Naive thymus-derived CD4-positive, alpha-beta T cell (primary cell): ENCODE measurements at regions of chr22 and their contacts with region 1.

Region 1: DNA sequence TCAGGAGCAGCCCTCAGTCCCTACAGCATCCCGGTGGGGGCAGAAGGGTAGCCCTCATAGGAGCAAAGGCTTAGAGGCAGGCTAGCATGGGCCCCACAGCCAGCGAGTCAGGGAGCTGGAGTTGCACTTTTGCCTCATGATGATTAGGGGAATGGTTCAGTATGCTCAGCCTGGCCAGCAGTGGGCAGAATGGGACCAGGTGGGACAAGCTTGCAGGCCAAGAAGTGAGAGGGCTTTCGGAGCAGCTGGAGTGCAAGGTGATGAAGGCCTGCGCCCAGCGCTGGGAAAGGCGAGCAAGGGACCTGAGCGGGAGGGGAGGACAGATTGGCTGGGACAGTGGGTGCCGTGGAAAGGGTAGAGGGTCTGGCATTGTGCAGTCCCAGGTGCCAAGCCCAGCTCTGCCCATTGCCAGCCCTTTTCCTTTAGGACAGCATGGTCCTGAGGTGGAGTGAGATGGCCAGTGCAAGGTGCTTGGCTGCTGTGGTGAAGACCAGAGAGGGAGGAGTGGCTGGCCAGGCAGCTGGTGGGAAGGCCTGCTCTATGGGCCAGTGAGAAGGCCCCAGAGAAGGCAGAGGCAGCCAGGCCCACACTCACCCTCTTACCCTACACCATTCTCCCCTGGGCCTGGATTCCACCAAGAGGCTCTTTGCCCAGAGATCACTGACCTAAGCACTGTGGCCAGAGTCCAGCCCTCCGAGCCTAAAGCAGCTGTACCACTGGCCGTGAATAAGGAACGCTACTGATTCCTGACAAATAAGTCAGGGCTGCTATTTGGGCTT is 47.9 kb upstream of the SUSD2 start:
- DNase-seq: peak in 7 of 9 donors; percentile 43 to 65 (median 57)
- ATAC-seq: peak; percentile 62
- H3K4me3 ChIP-seq: no peak overlapping the region
- H3K4me3 Mint-ChIP-seq: peak overlapping the region in 8 of 10 donors; percentile 2 to 79 (median 60)
- H3K27ac ChIP-seq: peak overlapping the region; percentile 62
- H3K27ac Mint-ChIP-seq: peak overlapping the region; percentile 56 to 95 (median 89)
- H3K4me1 ChIP-seq: peaks cover 6 to 18% of the 10 kb centered on the region in 2 donors
- H3K4me1 Mint-ChIP-seq: peaks cover 18 to 33% (median 29%) of the 10 kb centered on the region in 7 donors
- H3K27me3 ChIP-seq: no peaks in the 10 kb centered on the region
- H3K27me3 Mint-ChIP-seq: no peaks in the 10 kb centered on the region

Region 2: GRCh38 chr22:23997092-23997491 is 136.3 kb before region 1 on chr22:
- CTCF ChIA-PET with region 1: no interaction called
- POLR2A ChIA-PET with region 1: no interaction called
- intact Hi-C with region 1: no loop called
- DNase-seq: no peak
- ATAC-seq: no peak
- H3K4me3 ChIP-seq: no peak overlapping the region
- H3K4me3 Mint-ChIP-seq: no peak overlapping the region
- H3K27ac ChIP-seq: no peak overlapping the region
- H3K27ac Mint-ChIP-seq: no peak overlapping the region
- H3K4me1 ChIP-seq: no peaks in the 10 kb centered on the region
- H3K4me1 Mint-ChIP-seq: peaks cover 0 to 6% (median 0%) of the 10 kb centered on the region in 7 donors
- H3K27me3 ChIP-seq: no peaks in the 10 kb centered on the region
- H3K27me3 Mint-ChIP-seq: peaks cover 0 to 14% (median 0%) of the 10 kb centered on the region in 5 donors

Region 3: GRCh38 chr22:24175160-24175808 is 41.9 kb after region 1 on chr22:
- CTCF ChIA-PET with region 1: interaction called, 93 read pairs
- POLR2A ChIA-PET with region 1: interaction called, 8 read pairs
- intact Hi-C with region 1: loop called (anchors 1 kb)
- DNase-seq: peak; percentile 35 to 69 (median 60)
- ATAC-seq: peak; percentile 73
- H3K4me3 ChIP-seq: no peak overlapping the region
- H3K4me3 Mint-ChIP-seq: no peak overlapping the region
- H3K27ac ChIP-seq: no peak overlapping the region
- H3K27ac Mint-ChIP-seq: peak overlapping the region in 3 of 9 donors; percentile 17 to 46 (median 34)
- H3K4me1 ChIP-seq: no peaks in the 10 kb centered on the region
- H3K4me1 Mint-ChIP-seq: no peaks in the 10 kb centered on the region
- H3K27me3 ChIP-seq: no peaks in the 10 kb centered on the region
- H3K27me3 Mint-ChIP-seq: no peaks in the 10 kb centered on the region

Region 4: DNA sequence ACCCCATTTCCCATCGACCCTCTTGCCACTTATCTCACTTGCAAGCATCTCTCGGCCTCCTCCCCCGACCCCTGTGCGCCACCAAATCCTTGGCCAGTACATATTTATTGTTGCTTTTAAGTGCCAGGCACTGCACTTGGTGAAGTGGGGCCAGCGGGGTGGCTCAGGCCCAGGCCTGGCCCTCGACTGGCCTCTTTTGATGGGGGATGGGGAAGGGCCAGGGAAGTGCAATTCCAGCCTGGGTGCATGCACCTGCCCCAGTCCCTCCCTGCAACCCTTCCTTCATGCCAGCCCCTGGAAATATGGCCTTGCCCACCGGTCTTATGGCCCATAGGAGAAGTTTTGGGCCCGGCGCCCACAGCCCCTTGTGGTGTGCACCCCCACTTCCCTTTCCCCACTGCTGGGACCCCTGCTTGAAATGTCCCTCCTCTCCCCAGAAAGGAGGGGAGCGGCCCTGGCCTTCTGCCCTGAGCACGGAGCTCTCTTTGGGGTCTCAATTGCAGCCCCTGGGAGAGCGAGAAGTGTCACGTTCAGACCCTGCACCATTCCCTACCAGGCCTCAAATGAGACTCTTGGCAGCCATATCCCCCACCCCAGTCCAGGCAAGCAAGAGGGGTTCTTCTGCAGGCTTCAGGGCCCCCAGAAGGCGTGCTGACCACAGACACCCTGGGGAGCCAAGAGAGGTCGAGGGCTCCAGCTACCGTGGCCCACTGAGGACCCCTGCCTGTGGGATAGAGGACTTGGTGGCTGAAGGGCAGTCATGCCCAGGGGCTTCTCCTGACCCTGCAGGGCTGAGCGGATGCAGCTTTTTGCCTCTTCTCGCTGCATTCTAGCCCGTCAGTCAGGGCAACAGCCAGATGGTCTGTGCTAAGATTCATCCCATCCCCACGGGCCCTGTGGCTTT is 48.9 kb after region 1 on chr22:
- CTCF ChIA-PET with region 1: interaction called, 93 read pairs
- POLR2A ChIA-PET with region 1: interaction called, 4 read pairs
- intact Hi-C with region 1: loop called in 1 of 2 experiments (anchors 1 kb)
- DNase-seq: no peak
- ATAC-seq: no peak
- H3K4me3 ChIP-seq: no peak overlapping the region
- H3K4me3 Mint-ChIP-seq: no peak overlapping the region
- H3K27ac ChIP-seq: no peak overlapping the region
- H3K27ac Mint-ChIP-seq: peak overlapping the region in 1 of 9 donors; percentile 8
- H3K4me1 ChIP-seq: no peaks in the 10 kb centered on the region
- H3K4me1 Mint-ChIP-seq: peaks cover 0 to 5% (median 0%) of the 10 kb centered on the region in 7 donors
- H3K27me3 ChIP-seq: no peaks in the 10 kb centered on the region
- H3K27me3 Mint-ChIP-seq: no peaks in the 10 kb centered on the region

Region 5: DNA sequence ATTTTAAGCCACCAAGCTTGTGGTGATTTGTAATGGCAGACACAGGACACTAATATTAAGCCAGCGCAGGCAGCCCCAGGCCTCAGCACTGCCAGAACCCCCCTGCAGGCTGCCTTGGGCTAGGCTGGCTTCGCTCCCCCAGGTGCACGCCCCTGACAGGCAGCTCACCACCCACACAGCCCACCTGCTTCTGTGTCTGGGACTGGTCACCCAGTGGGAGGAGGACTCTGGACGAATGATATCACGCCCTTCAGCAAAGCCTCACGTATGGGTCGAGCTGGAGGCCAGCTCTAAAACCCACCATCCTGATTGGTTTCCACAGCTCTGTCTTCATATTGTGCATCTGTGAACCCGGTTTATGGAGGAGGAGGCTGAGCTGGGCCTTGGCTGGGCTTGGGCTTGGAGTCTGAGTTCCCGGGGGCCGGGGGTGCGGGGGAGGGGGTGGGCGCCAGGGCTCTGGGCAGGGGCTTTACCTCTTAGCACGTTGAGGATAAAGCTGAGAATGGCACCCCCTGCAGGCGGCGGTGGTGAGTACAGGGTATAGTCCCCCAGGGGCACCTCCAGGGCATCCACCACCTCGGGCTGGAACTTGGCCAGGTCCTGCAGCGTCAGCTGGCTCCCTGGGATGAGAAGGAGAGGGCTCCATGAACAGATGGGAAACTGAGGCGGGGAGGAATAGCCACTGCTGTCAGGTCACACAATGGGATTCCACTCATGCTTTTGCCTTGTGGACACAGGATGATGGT is 97.7 kb after region 1 on chr22:
- CTCF ChIA-PET with region 1: interaction called, 6 read pairs
- POLR2A ChIA-PET with region 1: no interaction called
- intact Hi-C with region 1: loop called in 1 of 2 experiments (anchors 1 kb)
- DNase-seq: peak; percentile 19 to 72 (median 41)
- ATAC-seq: peak; percentile 85
- H3K4me3 ChIP-seq: no peak overlapping the region
- H3K4me3 Mint-ChIP-seq: no peak overlapping the region
- H3K27ac ChIP-seq: no peak overlapping the region
- H3K27ac Mint-ChIP-seq: peak overlapping the region in 3 of 9 donors; percentile 38 to 81 (median 61)
- H3K4me1 ChIP-seq: no peaks in the 10 kb centered on the region
- H3K4me1 Mint-ChIP-seq: peaks cover 0 to 9% (median 0%) of the 10 kb centered on the region in 7 donors
- H3K27me3 ChIP-seq: no peaks in the 10 kb centered on the region
- H3K27me3 Mint-ChIP-seq: no peaks in the 10 kb centered on the region